HepG2 (cell line): ENCODE measurements at regions of chr3 and their contacts with region 1.

Region 1: GRCh38 chr3:66822186-66823008 is 175.7 kb upstream of the KBTBD8 start:
- DNase-seq: peak; percentile 49
- ATAC-seq: peak; percentile 81
- H3K4me3 ChIP-seq: no peak overlapping the region
- H3K27ac ChIP-seq: no peak overlapping the region
- H3K4me1 ChIP-seq: peaks cover 62% of the 10 kb centered on the region
- H3K27me3 ChIP-seq: no peaks in the 10 kb centered on the region
- CTCF ChIP-seq: peak; percentile 70
- EP300 ChIP-seq: no peak
- POLR2A ChIP-seq: no peak
- RAD21 ChIP-seq: peak; percentile 62

Region 2: GRCh38 chr3:65674226-65674625 is 1148.2 kb before region 1 on chr3:
- CTCF ChIA-PET with region 1: no interaction called
- POLR2A ChIA-PET with region 1: no interaction called
- in situ Hi-C with region 1: no loop called
- intact Hi-C with region 1: no loop called
- DNase-seq: no peak
- ATAC-seq: no peak
- H3K4me3 ChIP-seq: no peak overlapping the region
- H3K27ac ChIP-seq: no peak overlapping the region
- H3K4me1 ChIP-seq: peaks cover 36% of the 10 kb centered on the region
- H3K27me3 ChIP-seq: no peaks in the 10 kb centered on the region
- CTCF ChIP-seq: no peak
- EP300 ChIP-seq: no peak
- POLR2A ChIP-seq: no peak
- RAD21 ChIP-seq: no peak

Region 3: GRCh38 chr3:66253790-66254620 is 568.4 kb before region 1 on chr3:
- CTCF ChIA-PET with region 1: interaction called, 9 read pairs
- POLR2A ChIA-PET with region 1: no interaction called
- in situ Hi-C with region 1: no loop called
- intact Hi-C with region 1: loop called (anchors 2 kb)
- DNase-seq: peak; percentile 23
- ATAC-seq: no peak
- H3K4me3 ChIP-seq: no peak overlapping the region
- H3K27ac ChIP-seq: no peak overlapping the region
- H3K4me1 ChIP-seq: 0 out of 2 replicates have a peak, but pooled peaks cover 5% of the 10 kb centered on the region
- H3K27me3 ChIP-seq: no peaks in the 10 kb centered on the region
- CTCF ChIP-seq: peak; percentile 55
- EP300 ChIP-seq: no peak
- POLR2A ChIP-seq: no peak
- RAD21 ChIP-seq: no peak